GM10248 (cell line): ENCODE measurements at regions of chr15 and their contacts with region 1.

Region 1: DNA sequence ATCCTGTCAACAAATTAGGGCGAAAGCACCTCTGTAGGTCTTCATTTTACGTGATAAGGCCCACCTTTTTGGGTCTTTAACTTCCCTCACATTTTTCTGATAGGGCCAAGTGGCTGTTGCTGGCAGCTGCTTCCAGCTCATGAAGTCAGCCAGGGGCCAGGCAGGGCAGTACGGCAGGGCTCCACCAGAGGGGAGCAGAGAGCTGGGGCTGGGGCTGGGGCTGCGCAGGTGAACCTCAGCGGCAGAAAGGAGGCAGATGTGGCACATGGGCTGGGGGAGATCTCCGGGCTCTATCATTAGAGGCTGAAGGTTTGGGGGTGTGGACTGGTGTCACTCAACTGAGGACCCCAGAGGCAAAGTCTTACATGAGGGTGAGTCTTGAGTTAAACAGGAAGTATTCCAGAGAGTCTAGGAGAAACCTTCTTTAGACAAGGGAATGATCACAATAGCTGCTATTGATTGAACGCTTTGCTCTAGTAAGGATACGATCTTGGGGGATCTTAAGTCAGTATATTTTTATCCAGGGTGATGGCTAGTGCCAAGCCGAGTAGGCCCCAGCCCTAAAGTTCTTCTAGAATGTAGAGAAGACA is 62.8 kb upstream of the MEX3B start:
- DNase-seq: peak; percentile 85
- CTCF ChIP-seq: peak; percentile 95

Region 2: DNA sequence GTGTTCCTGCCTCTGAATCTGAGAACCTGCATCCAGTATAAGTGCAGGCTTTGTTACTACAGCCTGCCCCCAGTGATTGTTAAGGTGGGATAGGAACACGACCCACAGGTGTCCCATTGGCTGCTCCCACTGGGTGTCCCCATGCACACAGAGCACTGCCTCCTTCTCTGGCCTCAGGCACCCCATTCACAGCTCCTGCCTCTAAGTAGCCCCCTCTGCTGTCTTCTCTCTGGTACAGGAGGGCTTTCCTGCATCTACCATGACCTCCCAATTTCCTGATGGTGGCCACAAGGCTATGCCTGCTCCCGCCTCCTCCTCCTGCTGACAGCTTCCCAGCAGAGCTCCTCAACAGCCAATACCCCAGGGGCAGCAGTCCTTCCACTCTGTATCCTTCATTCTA is 496.0 kb before region 1 on chr15:
- CTCF ChIA-PET with region 1: no interaction called
- POLR2A ChIA-PET with region 1: no interaction called
- DNase-seq: no peak
- CTCF ChIP-seq: no peak

Region 3: GRCh38 chr15:82021992-82022391 is 86.6 kb before region 1 on chr15:
- CTCF ChIA-PET with region 1: no interaction called
- POLR2A ChIA-PET with region 1: no interaction called
- DNase-seq: no peak
- CTCF ChIP-seq: no peak

Region 4: GRCh38 chr15:82081914-82082762 is 26.4 kb before region 1 on chr15:
- CTCF ChIA-PET with region 1: interaction called, 16 read pairs
- POLR2A ChIA-PET with region 1: no interaction called
- DNase-seq: no peak
- CTCF ChIP-seq: no peak

Region 5: DNA sequence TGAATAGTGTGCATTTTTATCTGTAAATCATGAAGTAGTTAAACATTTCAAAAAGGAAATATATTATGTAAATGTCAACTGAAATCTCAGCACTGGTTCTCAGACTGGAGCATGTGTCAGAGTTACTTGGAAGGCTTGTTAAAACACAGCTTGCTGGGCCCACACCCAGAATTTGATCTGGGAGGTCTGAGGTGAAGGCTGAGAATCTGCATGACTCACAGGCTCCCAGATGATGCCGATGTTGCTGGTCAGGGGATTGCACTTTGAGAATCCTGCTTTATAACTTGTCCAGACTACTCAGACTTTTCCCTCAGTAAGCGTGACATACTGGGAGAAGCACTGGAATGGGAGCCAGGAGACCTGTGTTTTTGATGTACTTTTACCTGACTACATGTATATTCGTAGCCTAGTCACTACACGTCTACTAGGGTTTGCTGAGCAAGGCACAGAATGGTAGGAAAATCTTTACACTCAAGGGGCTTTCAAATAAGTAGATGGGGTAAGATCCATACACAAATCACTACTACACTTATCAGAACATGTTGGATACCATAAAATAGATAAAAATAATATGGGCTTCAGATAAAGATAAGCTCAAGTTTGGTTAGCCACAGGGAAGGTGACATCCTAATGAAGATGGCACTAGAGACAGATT is 14.3 kb after region 1 on chr15:
- CTCF ChIA-PET with region 1: interaction called, 27 read pairs
- POLR2A ChIA-PET with region 1: no interaction called
- DNase-seq: no peak
- CTCF ChIP-seq: no peak

Region 6: GRCh38 chr15:82128401-82129148 is 20.0 kb after region 1 on chr15:
- CTCF ChIA-PET with region 1: interaction called, 27 read pairs
- POLR2A ChIA-PET with region 1: no interaction called
- DNase-seq: no peak
- CTCF ChIP-seq: no peak

Region 7: DNA sequence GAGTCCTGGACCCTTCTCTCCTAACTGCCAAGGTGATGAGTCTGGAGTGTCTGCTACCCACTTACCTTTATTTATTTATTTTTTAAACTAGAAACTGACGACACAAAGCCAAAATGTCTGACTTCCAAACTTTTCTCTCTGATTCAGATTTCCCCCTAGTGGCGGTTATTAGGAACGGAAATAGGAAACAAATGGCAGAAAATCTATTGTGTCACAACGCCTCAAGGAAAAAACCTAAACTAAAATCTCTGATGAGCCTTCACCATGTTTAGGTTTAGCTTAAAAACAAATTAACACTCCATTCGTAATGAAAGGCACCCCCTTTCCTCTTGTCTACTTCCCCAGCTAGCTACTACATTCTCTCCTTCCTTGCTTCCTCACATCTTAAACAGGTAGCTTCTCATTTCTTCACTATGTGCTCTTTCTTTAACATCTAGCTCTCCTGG is 31.3 kb after region 1 on chr15:
- CTCF ChIA-PET with region 1: interaction called, 13 read pairs
- POLR2A ChIA-PET with region 1: no interaction called
- DNase-seq: no peak
- CTCF ChIP-seq: peak; percentile 42

Region 8: GRCh38 chr15:82159922-82160321 is 51.3 kb after region 1 on chr15:
- CTCF ChIA-PET with region 1: interaction called, 10 read pairs
- POLR2A ChIA-PET with region 1: no interaction called
- DNase-seq: no peak
- CTCF ChIP-seq: no peak

Region 9: DNA sequence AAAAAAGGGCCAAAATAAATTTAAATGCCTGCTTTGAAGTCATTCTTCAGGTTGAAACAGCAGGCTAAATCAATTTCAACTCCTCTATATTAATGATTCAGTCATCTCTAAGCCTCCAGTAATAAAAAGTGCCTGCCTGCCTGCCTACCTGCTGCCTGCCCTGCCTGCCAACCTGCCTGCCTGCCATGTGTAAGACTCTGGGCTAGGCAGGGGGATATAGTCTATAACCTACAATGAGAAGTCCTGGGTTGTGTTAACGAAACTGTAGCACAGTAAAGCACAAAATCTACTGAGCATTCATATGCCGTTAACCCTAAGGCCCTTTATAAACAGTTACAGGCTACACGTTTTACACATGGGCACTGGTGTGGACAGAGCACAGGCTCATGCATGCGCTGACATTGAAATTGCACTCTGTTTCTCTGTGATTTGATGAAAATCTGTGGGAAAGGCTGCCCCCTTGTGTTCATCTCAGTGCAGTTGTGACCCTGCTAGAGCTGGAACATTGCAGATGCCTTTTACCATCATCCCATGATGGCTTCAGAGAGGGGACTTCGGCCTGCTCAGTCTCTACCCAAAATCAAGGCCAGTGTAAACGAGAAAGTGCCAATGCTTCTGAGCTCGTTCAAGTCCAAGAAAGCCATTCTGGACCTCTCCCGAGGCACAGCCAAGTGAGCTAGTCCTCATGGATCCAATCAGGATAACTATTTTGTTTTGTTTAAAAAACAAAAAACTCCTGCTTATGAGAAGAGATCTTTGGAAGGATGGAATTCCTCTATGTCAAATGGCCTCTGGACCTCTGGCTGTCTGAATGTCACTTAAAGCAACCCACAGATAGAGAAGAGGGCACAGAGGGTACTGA is 89.4 kb after region 1 on chr15:
- CTCF ChIA-PET with region 1: interaction called, 39 read pairs
- POLR2A ChIA-PET with region 1: no interaction called
- DNase-seq: peak; percentile 63
- CTCF ChIP-seq: peak; percentile 88